Left ventricle myocardium superior (tissue), 1 donor: ENCODE measurements at regions of chr3 and their contacts with region 1.

Region 1: GRCh38 chr3:31004025-31004678 is 109.7 kb upstream of the GADL1 start:
- DNase-seq: no peak
- ATAC-seq: peak; percentile 24

Region 2: DNA sequence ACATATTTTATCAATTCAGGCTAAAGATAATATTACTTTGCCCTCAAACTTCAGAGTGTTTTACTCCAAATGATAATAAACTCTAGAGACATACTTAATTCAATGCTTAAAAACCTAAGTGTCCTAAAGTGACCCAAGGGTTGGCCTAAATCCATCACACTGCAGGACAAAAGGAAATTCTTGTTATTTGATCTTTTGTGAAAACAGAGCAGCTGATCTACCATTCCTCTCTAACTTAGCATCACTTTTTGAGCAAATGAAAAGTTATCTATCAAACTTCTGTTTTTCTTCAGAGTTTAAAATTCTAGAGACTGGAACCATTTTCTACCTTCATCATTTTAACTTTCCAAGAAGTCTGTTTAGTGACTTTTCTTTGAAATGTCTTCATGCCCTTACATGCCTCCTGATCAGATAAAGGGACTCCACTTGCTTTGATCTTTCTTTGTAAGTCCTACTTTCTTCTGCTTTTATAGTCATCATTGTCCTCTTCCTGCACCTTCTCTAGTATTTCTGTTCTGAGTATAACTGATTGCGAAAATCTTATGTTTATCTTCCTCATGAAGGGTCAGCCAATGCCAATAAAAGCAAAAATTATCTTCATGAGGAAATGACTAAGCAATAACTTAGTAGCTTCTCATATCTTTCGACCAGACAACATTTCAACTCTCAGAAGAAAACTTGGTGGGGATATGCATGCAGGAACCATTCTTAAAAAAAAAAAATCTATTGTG is 776.4 kb before region 1 on chr3:
- intact Hi-C with region 1: no loop called
- DNase-seq: no peak
- ATAC-seq: peak; percentile 78

Region 3: GRCh38 chr3:30768703-30769685 is 235.2 kb before region 1 on chr3:
- intact Hi-C with region 1: loop called (anchors 10 kb)
- DNase-seq: peak; percentile 85
- ATAC-seq: peak; percentile 56

Region 4: DNA sequence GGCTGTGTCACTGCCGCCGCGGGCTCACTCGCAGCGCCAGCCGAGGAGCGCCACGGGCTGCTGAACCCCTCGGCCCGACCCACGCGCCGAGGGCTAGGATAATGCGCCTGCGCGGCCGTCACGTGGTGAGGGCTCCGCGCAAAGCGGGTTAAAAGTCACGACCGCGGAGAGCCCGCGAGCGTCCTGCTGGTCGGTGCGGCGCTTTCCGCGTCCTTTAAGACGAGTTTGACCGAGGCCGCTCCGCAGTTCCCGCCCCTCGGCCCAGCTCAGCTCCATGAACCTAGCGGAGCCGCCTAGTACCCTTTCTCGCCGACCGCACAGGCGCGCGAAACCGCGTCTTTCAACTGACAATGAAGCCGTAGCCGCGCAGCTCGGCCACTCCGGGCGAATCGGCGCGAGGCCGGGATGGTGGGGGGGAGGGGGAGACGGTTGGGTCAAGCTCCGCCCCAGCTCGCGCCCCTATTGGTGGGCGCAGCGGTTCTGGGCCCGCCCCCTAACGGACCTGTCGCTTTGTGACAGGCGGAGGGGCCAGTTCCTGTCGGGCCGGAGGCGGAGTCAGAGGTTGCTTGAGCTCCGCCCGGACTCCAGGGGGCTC is 527.9 kb after region 1 on chr3:
- intact Hi-C with region 1: no loop called
- DNase-seq: peak; percentile 100
- ATAC-seq: peak; percentile 96